Activated CD4-positive, alpha-beta T cell treated with anti-CD3 and anti-CD28 coated beads, Interleukin-2, amount 10 ng/mL, durations not matched to agents 24 days and 14 days (primary cell): ENCODE measurements at regions of chr1 and their contacts with region 1.

Region 1: DNA sequence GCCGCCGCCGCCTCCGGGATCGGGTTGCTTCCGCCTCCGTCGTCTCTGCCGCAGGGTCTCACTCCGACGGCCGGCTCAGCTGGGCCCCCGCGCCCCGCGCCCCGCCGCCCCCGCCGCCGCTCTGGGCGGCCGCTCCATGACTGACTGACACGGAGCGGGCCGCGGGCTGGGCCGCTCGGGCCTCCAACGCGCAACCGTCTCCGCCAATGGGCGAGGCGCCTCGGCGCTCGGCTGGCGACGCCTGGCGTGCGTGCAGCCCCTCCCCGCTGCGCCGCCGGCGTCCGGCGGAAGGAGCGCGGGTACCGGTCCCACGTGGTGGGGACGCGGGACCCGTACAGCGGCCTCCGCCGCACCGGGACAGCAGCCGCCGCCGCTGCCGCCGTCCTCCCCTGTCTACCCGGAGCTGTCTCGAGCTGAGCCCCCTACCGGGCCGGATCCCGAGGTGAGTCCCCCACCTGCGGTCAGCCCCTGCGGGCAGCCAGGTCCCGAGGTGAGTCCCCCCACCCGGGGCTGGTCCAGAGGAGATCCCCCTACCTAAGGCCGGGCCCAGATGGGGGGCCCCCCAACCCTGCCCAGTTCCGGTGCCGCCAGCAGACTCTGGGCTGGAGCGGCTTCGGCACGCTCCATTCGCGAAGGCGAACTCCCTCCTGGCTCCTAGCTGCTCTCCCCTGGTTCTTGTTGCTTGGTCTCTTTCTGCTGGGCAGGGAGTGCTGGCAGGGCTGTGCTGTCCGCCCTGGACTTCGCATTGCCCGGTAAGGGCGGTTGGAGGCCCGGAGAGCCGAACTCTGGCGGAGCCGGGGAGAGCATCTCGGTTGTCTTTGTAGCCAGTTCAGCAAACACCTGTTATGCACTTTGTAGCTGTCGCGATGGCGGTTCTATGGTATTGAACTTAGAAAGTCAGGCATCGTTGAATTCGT is at the starts of genes TAF5L and URB2:
- DNase-seq: peak; percentile 97
- H3K4me3 Mint-ChIP-seq: peak within 1 kb of the TSS; percentile 99
- H3K27ac Mint-ChIP-seq: peak within 1 kb of the TSS; percentile 96
- H3K4me1 Mint-ChIP-seq: peaks cover 49% of the 10 kb centered on the region
- H3K27me3 Mint-ChIP-seq: no peaks in the 10 kb centered on the region
- total RNA-seq, gene TAF5L: 29.7 and 30.7 TPM in 2 replicates
- total RNA-seq, gene URB2: 35.8 and 37.1 TPM in 2 replicates

Region 2: GRCh38 chr1:229507951-229508822 is 118.0 kb before region 1 on chr1 and contains the start of gene NUP133:
- intact Hi-C with region 1: loop called (anchors 2 kb)
- DNase-seq: peak; percentile 99
- H3K4me3 Mint-ChIP-seq: peak within 1 kb of the TSS; percentile 92
- H3K27ac Mint-ChIP-seq: peak within 1 kb of the TSS; percentile 92
- H3K4me1 Mint-ChIP-seq: peaks cover 32% of the 10 kb centered on the region
- H3K27me3 Mint-ChIP-seq: peaks cover 2% of the 10 kb centered on the region
- total RNA-seq, gene NUP133: 52.3 and 52.9 TPM in 2 replicates